ENCODE measurements at regions of chr12 and their contacts with region 1.

Region 1: GRCh38 chr12:52879394-52880351 is 25.2 kb downstream of the KRT8 start:
- DNase-seq: peak; percentile 55 to 82 (median 74)
- H3K4me3 ChIP-seq: peak overlapping the region in 52 of 59 donors; percentile 4 to 58 (median 38)
- H3K27ac ChIP-seq: peak overlapping the region in 13 of 59 donors; percentile 1 to 76 (median 41)
- H3K27me3 ChIP-seq: peaks cover 0 to 9% (median 0%) of the 10 kb centered on the region in 45 donors
- CTCF ChIP-seq: peak; percentile 24 to 90 (median 74)

Region 2: DNA sequence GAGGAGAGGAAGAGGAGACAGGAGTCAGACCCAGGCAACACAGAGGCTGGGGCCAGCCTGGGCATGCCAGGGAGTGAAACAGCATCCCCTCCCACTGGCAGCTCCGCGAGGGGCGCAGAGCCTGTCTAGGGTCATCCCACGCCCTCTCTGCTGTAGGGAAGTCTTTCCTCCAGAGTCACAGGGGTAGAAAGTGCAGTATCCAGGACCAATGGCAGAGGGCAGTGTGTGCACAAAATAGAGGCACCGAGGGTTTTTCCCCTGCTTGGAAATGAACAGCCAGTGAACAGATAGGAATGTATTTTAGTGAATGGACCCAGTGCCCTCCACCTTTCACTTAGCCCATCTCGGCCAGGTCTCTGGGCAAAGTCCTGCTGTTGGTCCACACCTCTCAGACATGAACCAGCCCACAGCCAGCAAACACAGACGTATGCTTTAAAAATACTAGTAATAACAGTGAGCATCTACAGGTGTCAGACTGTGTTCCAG is 296.7 kb before region 1 on chr12:
- intact Hi-C with region 1: loop called (anchors 2 to 5 kb)
- DNase-seq: peak in 5 of 10 donors; percentile 11 to 68 (median 56)
- H3K4me3 ChIP-seq: no peak overlapping the region
- H3K27ac ChIP-seq: no peak overlapping the region
- H3K27me3 ChIP-seq: no peaks in the 10 kb centered on the region
- CTCF ChIP-seq: peak; percentile 22 to 83 (median 70)

Region 3: DNA sequence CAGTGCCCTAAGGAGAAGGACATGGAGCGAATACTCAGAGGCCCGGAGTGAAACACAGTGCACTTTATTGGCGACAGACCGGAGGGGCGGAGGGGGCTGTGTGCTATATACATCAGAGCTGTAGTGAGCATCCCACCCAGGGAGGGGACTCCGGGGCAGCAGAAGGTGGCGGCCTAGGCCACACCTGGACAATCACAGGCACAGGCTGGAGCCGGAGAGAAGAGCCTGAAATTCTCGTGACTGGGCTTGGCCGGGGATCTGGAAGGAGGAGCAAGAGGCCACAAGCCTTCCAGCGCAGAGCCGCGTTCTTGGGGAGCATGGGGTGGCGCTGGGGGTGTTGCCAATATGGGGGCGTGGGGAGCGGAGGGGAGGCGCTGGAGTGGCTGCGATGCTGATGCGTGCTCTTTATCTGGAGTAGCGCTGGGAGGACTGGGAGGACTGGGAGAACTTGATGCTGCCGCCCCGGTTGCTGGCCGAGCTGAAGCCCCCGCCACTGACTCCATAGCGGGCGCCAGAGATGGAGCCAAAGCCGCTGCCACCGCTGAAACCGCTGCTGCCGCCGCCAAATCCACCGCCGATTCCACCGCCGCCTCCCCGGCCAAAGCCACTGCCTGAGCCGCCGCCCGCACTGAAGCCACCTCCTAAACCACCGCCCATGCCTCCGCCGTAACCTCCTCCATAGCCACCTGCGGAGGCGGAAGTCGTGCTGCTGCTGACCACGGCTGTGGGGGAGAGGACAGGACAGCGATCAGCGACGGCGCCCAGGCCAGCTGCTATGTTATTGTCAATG is 89.8 kb before region 1 on chr12:
- intact Hi-C with region 1: no loop called
- DNase-seq: peak in 2 of 10 donors; percentile 50 to 55
- H3K4me3 ChIP-seq: peak overlapping the region in 44 of 59 donors; percentile 3 to 53 (median 30)
- H3K27ac ChIP-seq: no peak overlapping the region
- H3K27me3 ChIP-seq: peaks cover 0 to 31% (median 6%) of the 10 kb centered on the region in 45 donors
- CTCF ChIP-seq: no peak

Measured in dorsolateral prefrontal cortex (tissue), 120 donors.